Panc1 (cell line): ENCODE measurements at regions of chr13 and their contacts with region 1.

Region 1: GRCh38 chr13:88526186-88526852 is 855.1 kb downstream of the SLITRK5 start:
- DNase-seq: no peak
- ATAC-seq: no peak
- H3K4me3 ChIP-seq: no peak overlapping the region
- H3K27ac ChIP-seq: no peak overlapping the region
- H3K4me1 ChIP-seq: no peaks in the 10 kb centered on the region
- H3K27me3 ChIP-seq: no peaks in the 10 kb centered on the region
- CTCF ChIP-seq: no peak

Region 2: DNA sequence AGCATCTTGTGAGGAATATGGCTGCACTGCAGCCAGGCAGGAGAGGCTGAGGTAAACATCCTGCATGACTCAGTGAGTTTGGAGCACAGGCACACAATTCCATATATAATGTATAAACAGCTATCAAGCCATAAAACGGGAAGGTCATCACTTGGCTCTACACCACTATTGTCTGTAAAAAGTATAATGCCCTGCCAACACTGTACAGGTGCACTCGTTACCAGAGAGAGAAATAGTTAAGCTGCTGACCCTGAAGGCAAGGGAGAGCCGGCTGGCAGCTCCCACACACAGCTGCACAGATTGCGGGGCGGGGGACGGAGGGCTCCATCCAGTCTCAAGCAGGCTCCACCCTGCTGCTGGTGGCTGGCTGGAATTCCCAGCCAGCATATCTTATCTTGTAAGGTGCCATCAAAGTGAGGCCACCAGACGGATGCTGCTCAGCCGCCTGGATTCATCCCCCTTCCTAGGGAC is 187.0 kb before region 1 on chr13:
- CTCF ChIA-PET with region 1: no interaction called
- POLR2A ChIA-PET with region 1: interaction called, 10 read pairs
- in situ Hi-C with region 1: no loop called
- intact Hi-C with region 1: no loop called
- DNase-seq: no peak
- ATAC-seq: no peak
- H3K4me3 ChIP-seq: no peak overlapping the region
- H3K27ac ChIP-seq: no peak overlapping the region
- H3K4me1 ChIP-seq: no peaks in the 10 kb centered on the region
- H3K27me3 ChIP-seq: no peaks in the 10 kb centered on the region
- CTCF ChIP-seq: no peak